Caco-2 (cell line): ENCODE measurements at regions of chr6 and their contacts with region 1.

Region 1: DNA sequence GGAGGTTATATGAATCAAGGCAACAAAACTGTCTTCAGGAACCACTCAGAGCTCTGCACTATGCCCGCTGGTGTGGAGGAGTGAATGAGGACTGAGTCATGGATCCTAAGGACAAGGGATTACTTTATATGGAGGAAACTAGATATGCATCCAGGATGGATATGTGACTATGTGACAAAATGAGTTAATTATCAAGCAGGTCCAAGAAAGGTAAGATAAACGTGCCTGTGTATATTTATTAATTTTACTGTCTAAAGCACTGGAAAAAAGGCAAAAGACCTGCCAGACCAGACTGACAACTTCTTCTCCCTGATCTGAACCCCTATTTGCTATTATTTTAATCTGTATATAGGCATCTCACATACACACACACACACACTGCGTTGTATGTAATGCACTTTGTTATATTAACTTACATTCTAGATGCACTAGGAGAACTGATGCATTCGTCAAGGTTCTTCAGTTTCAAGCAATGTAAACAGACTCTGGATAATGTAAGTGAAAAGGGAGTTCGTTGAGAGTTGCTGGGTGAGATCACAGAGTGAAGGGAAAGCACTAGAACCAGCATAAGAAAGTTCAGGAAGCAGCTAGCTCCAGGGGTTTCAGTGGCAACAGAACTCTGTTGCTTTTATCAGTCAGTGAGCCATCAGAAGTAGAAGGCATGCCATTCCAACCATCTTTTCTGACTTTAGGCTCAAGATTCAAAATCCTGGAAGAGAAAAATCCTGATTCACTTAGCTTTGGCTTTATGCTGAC is 26.4 kb upstream of the ADGRG6 start:
- DNase-seq: no peak
- H3K4me3 ChIP-seq: no peak overlapping the region
- H3K4me3 Mint-ChIP-seq: peak overlapping the region; percentile 9
- H3K27ac Mint-ChIP-seq: peak overlapping the region; percentile 6
- H3K4me1 ChIP-seq: peaks cover 50% of the 10 kb centered on the region
- H3K4me1 Mint-ChIP-seq: peaks cover 42% of the 10 kb centered on the region
- H3K27me3 ChIP-seq: no peaks in the 10 kb centered on the region
- H3K27me3 Mint-ChIP-seq: no peaks in the 10 kb centered on the region
- CTCF ChIP-seq: no peak

Region 2: DNA sequence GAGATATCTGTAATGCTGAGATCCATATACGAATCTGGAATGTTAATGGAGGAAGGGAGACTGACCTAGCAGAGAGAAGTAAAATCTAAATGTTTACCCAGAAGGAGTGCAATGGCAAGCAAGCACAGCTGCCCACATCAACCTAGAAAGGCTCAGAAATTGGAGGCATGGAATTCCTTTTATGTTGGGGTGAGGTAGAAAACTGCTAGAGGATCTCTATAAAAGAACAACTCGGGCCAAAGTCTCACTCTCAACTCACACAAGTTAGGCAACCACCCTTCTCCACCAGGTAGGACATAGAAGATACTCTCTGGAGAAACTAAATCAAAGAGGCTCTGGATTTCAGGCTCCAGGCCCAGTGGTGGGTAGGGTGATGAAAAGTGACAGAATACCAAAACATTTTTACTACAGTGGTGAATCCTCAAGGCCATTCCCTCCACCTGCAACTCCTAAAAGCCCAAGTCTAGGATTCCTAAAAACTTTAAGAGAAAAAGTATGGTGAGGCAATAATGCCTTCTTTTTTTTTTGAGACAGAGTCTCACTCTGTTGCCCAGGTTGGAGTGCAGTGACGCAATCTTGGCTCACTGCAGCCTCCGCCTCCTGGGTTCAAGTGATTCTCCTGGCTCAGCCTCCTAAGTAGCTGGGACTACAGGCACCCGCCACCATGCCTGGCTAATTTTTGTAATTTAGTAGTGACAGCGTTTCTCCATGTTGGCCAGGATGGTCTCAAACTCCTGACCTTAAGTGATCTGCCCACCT is 16.9 kb after region 1 on chr6:
- CTCF ChIA-PET with region 1: interaction called, 3 read pairs
- POLR2A ChIA-PET with region 1: no interaction called
- intact Hi-C with region 1: loop called (anchors 1 kb)
- DNase-seq: peak; percentile 72 to 73
- H3K4me3 ChIP-seq: no peak overlapping the region
- H3K4me3 Mint-ChIP-seq: no peak overlapping the region
- H3K27ac Mint-ChIP-seq: peak overlapping the region; percentile 84
- H3K4me1 ChIP-seq: peaks cover 43% of the 10 kb centered on the region
- H3K4me1 Mint-ChIP-seq: peaks cover 50% of the 10 kb centered on the region
- H3K27me3 ChIP-seq: no peaks in the 10 kb centered on the region
- H3K27me3 Mint-ChIP-seq: no peaks in the 10 kb centered on the region
- CTCF ChIP-seq: no peak